AG04450 (cell line): ENCODE measurements at regions of chr3 and their contacts with region 1.

Region 1: DNA sequence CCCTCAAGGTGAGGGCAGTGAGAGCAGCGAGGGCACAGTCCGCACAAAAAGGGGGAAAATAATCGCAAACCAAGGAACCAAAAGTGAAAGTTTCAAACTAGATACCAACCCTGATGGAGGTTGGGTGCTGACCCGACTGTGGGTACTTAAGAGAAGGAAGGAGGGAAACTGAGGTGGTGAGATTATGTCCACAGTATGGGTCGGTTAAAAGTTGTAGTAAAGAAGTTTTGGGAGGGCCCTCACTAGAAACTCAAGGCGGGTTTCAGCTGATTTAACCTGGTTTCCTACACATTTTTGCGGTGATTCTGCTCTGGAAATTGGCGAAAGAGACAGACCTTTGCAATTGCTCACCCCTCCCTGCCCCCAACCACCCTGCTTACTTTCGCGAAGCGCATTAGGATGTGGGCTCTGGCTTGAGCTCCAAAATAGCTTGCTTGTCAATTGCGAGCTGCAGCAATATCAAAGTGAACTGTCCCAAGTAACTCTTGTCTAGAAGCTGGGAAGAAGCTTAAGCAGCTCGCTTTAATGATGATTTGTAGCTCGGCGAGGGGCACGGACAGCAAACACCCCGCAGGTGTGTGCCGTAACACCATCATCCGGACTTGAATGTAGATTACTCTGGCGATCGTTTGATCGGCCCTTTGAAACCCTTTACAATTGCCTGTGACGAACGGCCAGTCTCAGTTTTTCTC is 15.8 kb downstream of the SOX2 start:
- DNase-seq: no peak
- H3K4me3 ChIP-seq: peak overlapping the region; percentile 38
- H3K27ac ChIP-seq: no peak overlapping the region
- H3K27me3 ChIP-seq: peaks cover 63% of the 10 kb centered on the region
- CTCF ChIP-seq: no peak

Region 2: DNA sequence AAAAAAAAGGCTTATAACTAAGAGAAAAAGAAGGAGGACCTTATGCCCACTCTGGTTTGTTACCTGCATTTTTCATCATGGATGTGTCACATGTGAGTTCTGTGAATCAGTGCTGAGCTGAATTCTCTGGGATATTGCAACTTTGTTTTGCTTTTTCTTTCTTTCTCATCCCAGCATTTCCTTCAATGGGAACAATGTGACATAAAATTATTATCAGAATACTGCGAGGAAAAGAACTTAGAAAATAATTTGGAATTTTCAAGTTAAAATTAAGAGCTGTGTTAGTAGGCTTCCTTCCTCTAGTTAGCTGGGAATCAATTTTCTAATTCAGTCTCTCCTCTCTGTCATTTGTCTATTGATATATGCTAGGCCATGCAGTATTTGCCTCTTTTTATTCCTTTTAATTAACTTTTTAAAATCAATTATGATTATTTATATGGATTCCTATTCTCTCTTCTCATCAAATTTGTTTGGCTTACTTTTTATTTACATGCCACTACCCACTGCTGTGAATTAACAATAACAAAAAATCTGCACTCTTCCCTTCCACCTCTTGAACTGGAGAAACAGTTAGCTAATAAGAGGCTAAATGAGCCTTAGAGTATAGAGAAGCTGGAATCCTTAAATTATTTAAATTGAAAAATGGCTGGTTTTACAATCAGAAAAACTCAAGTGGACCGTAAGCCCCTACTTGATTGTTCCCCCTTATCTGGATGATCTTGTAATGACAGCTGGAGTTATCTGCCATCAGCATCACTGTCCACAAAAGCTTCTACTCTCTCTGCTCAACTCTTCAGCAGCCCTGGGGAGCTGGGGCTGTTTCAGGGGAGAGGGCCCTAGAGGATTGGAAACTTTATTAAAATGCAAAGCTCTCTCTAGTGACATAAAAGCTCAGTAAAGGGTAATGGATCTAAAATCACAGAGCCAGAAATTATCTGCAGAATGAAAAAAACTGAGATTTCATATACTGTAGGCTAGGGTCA is 111.1 kb before region 1 on chr3:
- CTCF ChIA-PET with region 1: no interaction called
- POLR2A ChIA-PET with region 1: no interaction called
- DNase-seq: no peak
- H3K4me3 ChIP-seq: no peak overlapping the region
- H3K27ac ChIP-seq: no peak overlapping the region
- H3K27me3 ChIP-seq: no peaks in the 10 kb centered on the region
- CTCF ChIP-seq: no peak

Region 3: GRCh38 chr3:181660337-181660736 is 67.2 kb before region 1 on chr3:
- CTCF ChIA-PET with region 1: interaction called, 13 read pairs
- POLR2A ChIA-PET with region 1: no interaction called
- DNase-seq: no peak
- H3K4me3 ChIP-seq: no peak overlapping the region
- H3K27ac ChIP-seq: no peak overlapping the region
- H3K27me3 ChIP-seq: no peaks in the 10 kb centered on the region
- CTCF ChIP-seq: no peak

Region 4: GRCh38 chr3:181921220-181921619 is 193.7 kb after region 1 on chr3:
- CTCF ChIA-PET with region 1: no interaction called
- POLR2A ChIA-PET with region 1: no interaction called
- DNase-seq: no peak
- H3K4me3 ChIP-seq: no peak overlapping the region
- H3K27ac ChIP-seq: no peak overlapping the region
- H3K27me3 ChIP-seq: no peaks in the 10 kb centered on the region
- CTCF ChIP-seq: no peak